ENCODE measurements at regions of chr7 and their contacts with region 1.

Region 1: GRCh38 chr7:42886129-42886528 is 25.7 kb downstream of the C7orf25 start:
- DNase-seq: no peak
- ATAC-seq: no peak
- H3K4me3 ChIP-seq: no peak overlapping the region
- H3K4me3 Mint-ChIP-seq: no peak overlapping the region
- H3K27ac ChIP-seq: no peak overlapping the region
- H3K27ac Mint-ChIP-seq: no peak overlapping the region
- H3K4me1 ChIP-seq: peaks cover 21 to 32% of the 10 kb centered on the region in 2 donors
- H3K4me1 Mint-ChIP-seq: peaks cover 55% of the 10 kb centered on the region
- H3K27me3 ChIP-seq: no peaks in the 10 kb centered on the region
- H3K27me3 Mint-ChIP-seq: no peaks in the 10 kb centered on the region
- CTCF ChIP-seq: peak; percentile 26

Region 2: GRCh38 chr7:41977151-41977651 is 908.9 kb before region 1 on chr7:
- CTCF ChIA-PET with region 1: no interaction called
- POLR2A ChIA-PET with region 1: no interaction called
- intact Hi-C with region 1: loop called (anchors 10 kb)
- DNase-seq: peak; percentile 21
- ATAC-seq: no peak
- H3K4me3 ChIP-seq: no peak overlapping the region
- H3K4me3 Mint-ChIP-seq: no peak overlapping the region
- H3K27ac ChIP-seq: no peak overlapping the region
- H3K27ac Mint-ChIP-seq: no peak overlapping the region
- H3K4me1 ChIP-seq: no peaks in the 10 kb centered on the region
- H3K4me1 Mint-ChIP-seq: no peaks in the 10 kb centered on the region
- H3K27me3 ChIP-seq: peaks cover 0 to 4% (median 2%) of the 10 kb centered on the region in 4 experiments
- H3K27me3 Mint-ChIP-seq: peaks cover 13% of the 10 kb centered on the region
- CTCF ChIP-seq: peak; percentile 35

Region 3: DNA sequence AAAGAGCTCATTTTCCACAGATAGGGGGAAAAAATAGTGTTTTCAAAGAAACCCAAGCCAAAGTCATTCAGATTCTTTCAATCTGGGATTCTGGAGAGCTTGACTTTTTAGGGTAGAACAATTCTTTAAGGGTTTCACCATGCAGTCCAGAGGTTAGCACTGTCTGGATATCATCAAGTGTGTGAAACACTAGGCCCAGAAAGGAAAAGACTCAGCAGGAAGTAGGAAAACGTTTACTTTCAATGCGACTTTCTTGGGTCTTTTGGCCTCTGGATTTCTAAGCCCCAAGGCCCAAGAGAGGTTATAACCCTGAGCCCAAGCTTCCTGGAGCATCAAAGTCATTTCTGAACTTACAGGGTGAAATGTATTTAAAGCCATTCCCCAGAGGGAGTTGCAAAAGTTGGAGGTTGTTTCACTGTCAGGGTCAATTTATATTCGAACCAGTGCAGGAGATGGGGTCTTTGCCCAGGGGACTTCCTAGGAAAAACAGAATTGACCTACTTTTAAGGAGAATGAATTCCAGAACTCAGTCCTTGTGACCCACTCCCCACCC is 132.2 kb before region 1 on chr7:
- CTCF ChIA-PET with region 1: no interaction called
- POLR2A ChIA-PET with region 1: no interaction called
- intact Hi-C with region 1: no loop called
- DNase-seq: no peak
- ATAC-seq: no peak
- H3K4me3 ChIP-seq: no peak overlapping the region
- H3K4me3 Mint-ChIP-seq: no peak overlapping the region
- H3K27ac ChIP-seq: no peak overlapping the region
- H3K27ac Mint-ChIP-seq: no peak overlapping the region
- H3K4me1 ChIP-seq: no peaks in the 10 kb centered on the region
- H3K4me1 Mint-ChIP-seq: no peaks in the 10 kb centered on the region
- H3K27me3 ChIP-seq: no peaks in the 10 kb centered on the region
- H3K27me3 Mint-ChIP-seq: peaks cover 8% of the 10 kb centered on the region
- CTCF ChIP-seq: no peak

Region 4: DNA sequence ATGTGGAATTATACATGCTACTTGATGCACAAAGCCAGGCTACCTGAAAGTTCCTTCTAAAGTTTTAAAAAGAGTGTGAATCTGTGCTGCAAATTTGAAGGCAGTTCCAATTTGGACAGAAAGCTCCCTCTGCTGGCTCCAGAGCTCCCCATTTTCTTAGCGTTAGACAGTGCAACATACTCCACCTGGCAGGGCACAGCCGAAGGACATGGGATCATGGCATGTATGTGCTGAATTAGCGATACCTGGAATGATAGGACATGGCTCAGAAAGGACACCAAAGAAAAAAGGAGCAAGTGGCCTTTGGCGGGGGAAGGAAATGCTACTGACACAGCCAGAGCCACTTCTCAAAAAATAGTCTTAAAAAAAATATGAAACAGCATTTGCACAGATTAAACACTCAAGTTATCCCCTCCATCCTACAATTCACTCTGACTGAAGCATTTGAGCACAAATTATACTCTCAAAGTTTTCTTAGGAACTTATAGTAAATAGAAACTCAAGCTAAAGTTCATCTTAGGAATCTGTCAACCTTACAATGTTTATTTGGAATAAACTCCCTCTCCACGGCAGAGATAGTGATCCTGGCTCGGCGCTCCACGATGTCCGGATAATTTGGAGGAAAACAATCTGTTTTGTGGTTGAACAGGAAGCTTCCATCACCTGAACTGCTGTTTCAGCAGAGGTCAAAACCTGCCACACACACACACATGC is 54.3 kb before region 1 on chr7:
- CTCF ChIA-PET with region 1: no interaction called
- POLR2A ChIA-PET with region 1: no interaction called
- intact Hi-C with region 1: no loop called
- DNase-seq: no peak
- ATAC-seq: no peak
- H3K4me3 ChIP-seq: no peak overlapping the region
- H3K4me3 Mint-ChIP-seq: no peak overlapping the region
- H3K27ac ChIP-seq: no peak overlapping the region
- H3K27ac Mint-ChIP-seq: no peak overlapping the region
- H3K4me1 ChIP-seq: no peaks in the 10 kb centered on the region
- H3K4me1 Mint-ChIP-seq: no peaks in the 10 kb centered on the region
- H3K27me3 ChIP-seq: peaks cover 0 to 4% (median 2%) of the 10 kb centered on the region in 4 experiments
- H3K27me3 Mint-ChIP-seq: peaks cover 17% of the 10 kb centered on the region
- CTCF ChIP-seq: no peak

Measured in B cell (primary cell).